ENCODE measurements at regions of chr12 and their contacts with region 1.

Region 1: DNA sequence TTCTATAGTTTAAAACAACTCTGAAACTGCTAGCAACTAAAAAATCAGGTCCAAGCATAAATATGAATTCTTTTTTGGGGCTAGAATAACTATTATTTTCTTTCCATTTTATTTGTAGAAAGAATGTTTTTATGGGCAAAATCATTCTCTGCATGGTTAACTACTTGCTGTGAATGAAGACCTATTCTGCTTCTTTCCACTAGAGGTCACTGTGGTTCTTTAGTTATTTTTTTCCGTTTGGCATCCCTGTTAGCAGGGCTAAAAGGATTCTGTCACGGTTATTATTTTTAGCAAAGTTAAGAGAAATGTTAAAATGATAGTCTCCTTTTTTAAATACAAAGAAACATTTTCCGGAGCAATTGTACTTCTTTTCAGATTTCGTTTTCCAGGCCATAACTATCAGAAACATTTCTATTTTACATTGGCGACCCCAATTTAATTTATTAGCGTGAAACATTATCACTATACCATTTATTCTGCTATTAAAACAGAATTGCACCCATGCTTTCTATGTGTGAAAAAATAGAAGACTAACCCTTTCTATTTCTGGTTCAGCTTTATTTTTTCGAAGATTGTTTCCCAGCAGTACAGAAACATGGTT is 404.8 kb downstream of the ATP23 start:
- DNase-seq: no peak
- ATAC-seq: no peak
- H3K4me3 Mint-ChIP-seq: no peak overlapping the region
- H3K27ac Mint-ChIP-seq: no peak overlapping the region
- H3K4me1 Mint-ChIP-seq: no peaks in the 10 kb centered on the region
- H3K27me3 Mint-ChIP-seq: peaks cover 8% of the 10 kb centered on the region

Region 2: DNA sequence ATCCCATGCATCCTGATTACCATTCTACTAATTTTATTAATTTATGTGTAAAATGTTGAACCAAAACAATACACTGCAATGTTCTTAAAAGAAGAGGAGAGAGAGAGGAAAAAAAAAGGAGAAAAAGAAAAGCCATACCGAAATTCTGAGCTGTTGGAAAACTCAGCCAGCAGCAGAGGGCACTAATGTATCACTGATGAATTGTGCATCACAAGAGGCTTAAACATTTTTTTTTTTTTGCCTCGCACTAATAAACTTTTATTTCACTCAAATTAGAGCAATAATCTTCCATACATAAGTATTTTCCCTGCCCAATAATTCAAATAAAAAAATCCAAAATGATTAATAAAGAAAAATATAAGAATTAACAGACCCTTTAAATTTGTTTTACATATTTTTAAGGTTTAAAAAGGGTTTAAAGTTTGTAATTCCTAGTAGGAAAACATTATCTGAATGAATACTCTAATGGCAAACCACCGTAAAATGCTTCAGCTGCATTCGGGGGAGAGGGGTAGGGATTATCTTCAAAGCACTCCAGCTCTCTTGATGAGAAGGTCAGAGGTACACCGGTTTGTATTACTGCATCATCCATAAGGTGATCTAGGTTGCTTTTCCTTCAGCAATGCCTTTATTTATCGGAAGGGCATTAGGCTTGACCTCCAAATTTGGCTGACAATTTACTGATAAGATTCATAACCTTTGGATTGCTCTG is 362.8 kb before region 1 on chr12:
- CTCF ChIA-PET with region 1: no interaction called
- POLR2A ChIA-PET with region 1: no interaction called
- intact Hi-C with region 1: loop called in 1 of 2 experiments (anchors 5 kb)
- DNase-seq: peak; percentile 47
- ATAC-seq: no peak
- H3K4me3 Mint-ChIP-seq: no peak overlapping the region
- H3K27ac Mint-ChIP-seq: no peak overlapping the region
- H3K4me1 Mint-ChIP-seq: no peaks in the 10 kb centered on the region
- H3K27me3 Mint-ChIP-seq: peaks cover 10% of the 10 kb centered on the region

Region 3: DNA sequence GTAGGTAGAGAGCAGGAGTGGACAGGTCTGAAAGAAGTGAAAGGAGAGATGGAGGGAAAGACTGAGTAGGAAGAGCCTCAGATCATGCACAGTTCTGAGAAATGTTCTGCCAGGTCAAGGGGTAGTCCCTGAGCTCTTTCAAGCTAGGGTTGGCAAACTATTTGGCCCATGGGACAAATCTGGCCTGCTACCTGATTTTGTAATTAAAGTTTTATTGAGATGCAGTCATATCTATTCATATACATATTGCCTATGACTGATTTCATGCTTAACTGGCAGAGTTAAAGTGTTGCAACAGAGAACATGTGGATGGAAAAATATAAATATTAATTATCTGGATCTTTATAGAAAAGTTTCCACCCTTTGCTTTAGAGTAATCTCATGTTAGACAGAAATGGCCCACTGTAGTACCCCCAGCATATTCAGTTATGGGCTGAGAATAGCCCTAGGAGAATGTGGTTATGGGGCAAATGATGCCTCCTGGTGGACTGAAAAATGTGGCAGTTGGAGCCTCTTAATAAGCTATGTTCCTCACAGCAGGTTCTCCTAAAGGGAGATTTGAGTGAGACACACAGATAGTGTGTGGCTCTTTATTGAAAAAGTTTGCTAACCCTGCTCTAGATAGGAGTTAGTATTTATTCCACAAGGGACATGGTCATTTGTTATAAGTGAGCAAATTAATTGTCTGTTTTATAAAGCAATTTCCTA is 97.3 kb after region 1 on chr12:
- CTCF ChIA-PET with region 1: interaction called, 11 read pairs
- POLR2A ChIA-PET with region 1: interaction called, 4 read pairs
- intact Hi-C with region 1: loop called (anchors 1 to 5 kb)
- DNase-seq: peak; percentile 16
- ATAC-seq: no peak
- H3K4me3 Mint-ChIP-seq: no peak overlapping the region
- H3K27ac Mint-ChIP-seq: no peak overlapping the region
- H3K4me1 Mint-ChIP-seq: no peaks in the 10 kb centered on the region
- H3K27me3 Mint-ChIP-seq: peaks cover 2% of the 10 kb centered on the region

Region 4: GRCh38 chr12:59087077-59087673 is 741.0 kb after region 1 on chr12:
- CTCF ChIA-PET with region 1: no interaction called
- POLR2A ChIA-PET with region 1: no interaction called
- intact Hi-C with region 1: loop called in 1 of 2 experiments (anchors 5 kb)
- DNase-seq: no peak
- ATAC-seq: no peak
- H3K4me3 Mint-ChIP-seq: no peak overlapping the region
- H3K27ac Mint-ChIP-seq: no peak overlapping the region
- H3K4me1 Mint-ChIP-seq: no peaks in the 10 kb centered on the region
- H3K27me3 Mint-ChIP-seq: peaks cover 7% of the 10 kb centered on the region